ENCODE measurements at regions of chr22 and their contacts with region 1.

Region 1: DNA sequence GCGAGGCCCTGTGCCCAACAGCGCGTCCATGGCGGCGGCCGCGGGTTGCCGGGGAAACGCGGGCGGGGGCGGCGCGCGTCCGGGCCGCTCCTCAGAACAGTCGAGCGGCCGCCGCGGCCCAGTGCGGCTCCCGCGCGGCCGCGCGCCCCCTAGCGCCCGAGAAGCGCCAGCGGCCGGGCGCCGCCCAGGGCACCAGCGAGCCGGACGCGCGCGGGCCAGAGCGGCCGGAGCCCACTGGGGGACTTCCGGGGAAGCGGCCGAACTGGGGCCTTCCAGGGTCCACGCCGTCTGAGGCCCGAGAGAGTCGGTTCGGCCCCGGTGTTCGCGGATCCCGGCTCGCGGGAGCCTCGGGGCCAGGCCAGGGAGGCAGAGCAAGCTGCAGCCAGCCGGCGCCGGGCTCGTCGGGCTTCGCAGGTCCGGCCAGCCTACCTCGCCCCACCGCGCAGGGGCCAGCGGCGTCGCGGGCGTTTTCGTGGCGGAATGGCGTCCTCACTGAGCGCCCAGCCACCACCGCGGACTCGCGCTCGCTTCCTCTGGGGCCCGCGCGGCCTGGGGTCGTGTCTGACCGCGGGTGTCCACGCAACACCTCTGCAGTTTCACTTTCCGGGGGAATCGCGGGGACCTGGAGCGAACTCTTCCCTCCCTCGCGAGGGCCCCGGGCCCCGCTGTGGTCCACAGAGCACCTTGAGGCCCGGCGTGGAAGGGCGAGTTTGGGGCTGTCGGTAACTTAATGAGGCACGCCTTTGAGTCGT is at the start of gene DENND6B:
- DNase-seq: peak; percentile 82
- ATAC-seq: peak; percentile 92
- H3K4me3 Mint-ChIP-seq: peak within 1 kb of the TSS; percentile 86
- H3K27ac Mint-ChIP-seq: peak within 1 kb of the TSS; percentile 76
- H3K4me1 Mint-ChIP-seq: peaks cover 20% of the 10 kb centered on the region
- H3K27me3 Mint-ChIP-seq: peaks cover 3% of the 10 kb centered on the region
- CTCF ChIP-seq: no peak
- total RNA-seq, gene DENND6B: 3.2 and 5.2 TPM in 2 replicates

Region 2: DNA sequence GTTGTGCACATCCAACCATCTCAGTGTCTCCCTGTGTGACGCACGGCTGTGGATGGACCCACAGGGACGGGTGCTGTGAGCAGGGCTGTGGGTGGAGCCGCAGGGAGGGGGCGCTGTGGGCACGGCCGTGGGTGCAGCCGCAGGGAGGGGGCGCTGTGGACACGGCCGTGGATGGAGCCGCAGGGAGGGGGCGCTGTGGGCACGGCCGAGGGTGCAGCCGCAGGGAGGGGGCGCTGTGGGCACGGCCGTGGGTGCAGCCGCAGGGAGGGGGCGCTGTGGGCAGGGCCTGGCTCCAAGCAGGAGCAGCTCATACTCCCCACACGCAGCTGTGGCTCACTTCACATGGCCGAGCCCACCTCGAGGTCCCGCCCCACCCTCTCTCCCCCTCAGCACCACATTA is 51.0 kb before region 1 on chr22:
- CTCF ChIA-PET with region 1: interaction called, 28 read pairs
- POLR2A ChIA-PET with region 1: interaction called, 10 read pairs
- intact Hi-C with region 1: loop called (anchors 1 kb)
- DNase-seq: no peak
- ATAC-seq: peak; percentile 78
- H3K4me3 Mint-ChIP-seq: no peak overlapping the region
- H3K27ac Mint-ChIP-seq: no peak overlapping the region
- H3K4me1 Mint-ChIP-seq: peaks cover 10% of the 10 kb centered on the region
- H3K27me3 Mint-ChIP-seq: no peaks in the 10 kb centered on the region
- CTCF ChIP-seq: no peak

Region 3: GRCh38 chr22:50293441-50294318 is 33.5 kb before region 1 on chr22:
- CTCF ChIA-PET with region 1: interaction called, 5 read pairs
- POLR2A ChIA-PET with region 1: interaction called, 23 read pairs
- intact Hi-C with region 1: loop called (anchors 1 kb)
- DNase-seq: no peak
- ATAC-seq: peak; percentile 51
- H3K4me3 Mint-ChIP-seq: peak overlapping the region; percentile 56
- H3K27ac Mint-ChIP-seq: no peak overlapping the region
- H3K4me1 Mint-ChIP-seq: peaks cover 47% of the 10 kb centered on the region
- H3K27me3 Mint-ChIP-seq: peaks cover 6% of the 10 kb centered on the region
- CTCF ChIP-seq: no peak

Region 4: GRCh38 chr22:50306753-50307749 is 20.1 kb before region 1 on chr22 and contains the start of gene PLXNB2:
- CTCF ChIA-PET with region 1: interaction called, 5 read pairs
- POLR2A ChIA-PET with region 1: interaction called, 14 read pairs
- intact Hi-C with region 1: loop called (anchors 2 kb)
- DNase-seq: no peak
- ATAC-seq: peak; percentile 45
- H3K4me3 Mint-ChIP-seq: peak within 1 kb of the TSS; percentile 38
- H3K27ac Mint-ChIP-seq: no peak within 1 kb of the TSS
- H3K4me1 Mint-ChIP-seq: peaks cover 52% of the 10 kb centered on the region
- H3K27me3 Mint-ChIP-seq: no peaks in the 10 kb centered on the region
- CTCF ChIP-seq: no peak
- total RNA-seq, gene PLXNB2: 18.6 and 20.6 TPM in 2 replicates

Region 5: GRCh38 chr22:50314455-50315288 is 12.5 kb before region 1 on chr22:
- CTCF ChIA-PET with region 1: interaction called, 11 read pairs
- POLR2A ChIA-PET with region 1: interaction called, 11 read pairs
- intact Hi-C with region 1: loop called (anchors 1 kb)
- DNase-seq: peak; percentile 76
- ATAC-seq: peak; percentile 90
- H3K4me3 Mint-ChIP-seq: peak overlapping the region; percentile 77
- H3K27ac Mint-ChIP-seq: peak overlapping the region; percentile 86
- H3K4me1 Mint-ChIP-seq: peaks cover 52% of the 10 kb centered on the region
- H3K27me3 Mint-ChIP-seq: no peaks in the 10 kb centered on the region
- CTCF ChIP-seq: no peak

Region 6: GRCh38 chr22:50456466-50457234 is 129.5 kb after region 1 on chr22:
- CTCF ChIA-PET with region 1: no interaction called
- POLR2A ChIA-PET with region 1: no interaction called
- intact Hi-C with region 1: no loop called
- DNase-seq: no peak
- ATAC-seq: peak; percentile 45
- H3K4me3 Mint-ChIP-seq: no peak overlapping the region
- H3K27ac Mint-ChIP-seq: peak overlapping the region; percentile 64
- H3K4me1 Mint-ChIP-seq: no peaks in the 10 kb centered on the region
- H3K27me3 Mint-ChIP-seq: no peaks in the 10 kb centered on the region
- CTCF ChIP-seq: no peak

Measured in activated B cell treated with CpG ODN at 0.5 μM for 24 hours (primary cell).